GM10248 (cell line): ENCODE measurements at regions of chr3 and their contacts with region 1.

Region 1: DNA sequence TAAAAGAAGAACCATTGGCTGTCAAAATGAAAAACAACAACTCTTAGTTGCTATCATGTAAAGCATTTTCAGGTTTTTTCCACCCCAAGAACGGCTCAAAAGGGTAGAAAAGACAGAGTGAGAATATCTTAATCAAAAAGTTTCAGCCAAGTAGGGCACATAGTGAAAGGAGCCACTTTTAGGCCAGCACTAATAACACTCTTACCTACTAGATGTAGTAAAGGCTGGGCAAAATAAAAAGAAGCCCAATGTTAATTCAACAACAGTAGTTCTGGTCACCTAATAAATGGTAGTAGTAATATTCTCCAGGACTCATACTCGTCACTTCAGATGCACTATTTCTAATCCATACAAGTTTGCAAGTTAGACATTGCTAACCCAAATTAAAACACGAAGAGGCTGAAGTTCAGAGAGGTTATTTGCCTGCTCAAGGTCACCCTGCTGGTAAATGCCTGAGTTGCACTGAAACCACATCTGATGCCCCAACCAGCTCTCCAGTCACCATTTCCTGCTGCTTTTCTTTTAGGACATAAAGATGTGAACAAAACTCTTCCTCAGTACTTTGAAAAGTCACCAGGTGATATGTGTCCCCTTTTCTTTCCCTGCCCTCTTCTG is 7.5 kb downstream of the GOLIM4 start:
- DNase-seq: peak; percentile 16
- CTCF ChIP-seq: peak; percentile 28

Region 2: DNA sequence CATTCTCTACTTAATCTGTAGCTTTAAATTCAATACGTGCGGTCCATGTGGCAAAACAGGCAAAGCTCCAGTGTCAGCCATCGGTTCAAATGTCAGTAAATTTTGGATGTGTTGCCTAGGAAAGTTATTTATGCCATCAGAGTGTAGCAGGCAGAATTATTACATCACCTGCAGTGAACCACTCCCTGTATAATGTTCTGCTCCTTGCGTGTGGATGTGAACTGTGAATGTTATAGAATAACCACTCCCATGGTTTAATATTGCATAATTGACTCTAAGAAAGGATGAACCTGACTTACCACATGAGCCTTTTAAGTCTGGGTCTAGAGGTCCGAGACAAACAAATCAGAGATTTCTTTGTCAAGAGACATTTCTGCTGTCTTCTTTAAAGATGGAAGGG is 138.0 kb before region 1 on chr3:
- CTCF ChIA-PET with region 1: no interaction called
- POLR2A ChIA-PET with region 1: no interaction called
- DNase-seq: no peak
- CTCF ChIP-seq: no peak

Region 3: DNA sequence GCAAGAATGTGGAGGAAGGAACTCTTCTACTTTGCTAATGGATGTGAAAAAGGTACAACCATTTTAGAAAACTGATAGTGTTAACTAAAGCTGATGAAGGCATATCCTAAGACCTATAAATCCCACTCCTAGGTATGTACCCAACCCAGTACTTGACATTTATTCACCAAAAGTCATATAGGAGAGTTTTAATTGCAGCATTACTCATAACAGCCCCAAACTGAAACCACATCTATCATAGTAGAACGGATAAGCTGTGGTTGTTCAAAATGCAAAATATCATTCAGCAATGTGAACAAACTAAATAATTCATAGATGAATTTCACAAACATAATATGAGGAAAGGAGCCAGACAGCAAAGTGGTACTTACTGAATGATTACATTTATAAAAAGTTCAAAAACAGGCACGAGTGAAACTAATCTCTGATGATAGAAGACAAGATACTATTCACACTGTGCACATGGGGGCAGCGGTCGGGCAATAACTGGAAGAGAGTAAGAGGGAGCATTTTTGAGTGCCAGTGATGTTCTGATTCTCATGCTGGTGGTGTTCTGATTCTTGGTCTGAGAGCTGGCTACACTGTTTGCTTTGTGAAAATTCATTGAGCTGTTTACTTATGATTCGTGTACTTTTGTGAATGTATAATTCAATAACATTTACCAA is 26.7 kb before region 1 on chr3:
- CTCF ChIA-PET with region 1: interaction called, 17 read pairs
- POLR2A ChIA-PET with region 1: no interaction called
- DNase-seq: no peak
- CTCF ChIP-seq: no peak

Region 4: DNA sequence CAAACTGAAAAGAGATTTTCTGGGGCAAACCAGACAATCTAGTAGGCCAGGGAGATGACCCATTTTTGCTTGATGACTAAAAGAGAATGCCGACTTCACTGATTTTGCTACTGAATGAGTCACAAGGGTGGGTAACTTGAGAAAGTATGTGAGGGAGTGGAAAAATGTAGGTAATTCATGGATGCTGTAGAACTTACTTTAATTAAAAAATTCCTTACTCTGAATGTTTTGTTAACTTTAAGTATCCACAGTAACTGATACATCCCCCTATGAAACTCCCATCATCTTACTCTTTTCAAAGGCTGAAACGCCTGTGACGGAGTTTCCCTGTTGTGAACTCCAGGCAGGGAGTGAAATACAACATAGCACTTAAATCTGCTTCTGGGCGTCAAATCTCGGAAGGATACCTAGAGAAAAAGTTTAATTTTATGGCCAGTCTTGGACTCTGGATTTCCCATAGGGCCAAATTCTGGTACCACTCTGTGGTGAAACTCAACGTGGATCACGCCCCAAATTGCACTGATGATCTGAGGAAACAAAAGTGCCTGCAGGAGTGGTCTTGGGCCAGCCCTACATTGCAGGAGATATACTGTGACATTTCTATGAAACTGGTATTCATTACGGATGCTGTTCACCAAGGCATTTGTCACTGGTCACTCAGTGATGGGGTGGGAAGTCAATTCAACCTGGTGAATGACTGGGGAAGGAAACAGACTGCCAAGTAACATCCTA is 16.5 kb before region 1 on chr3:
- CTCF ChIA-PET with region 1: interaction called, 15 read pairs
- POLR2A ChIA-PET with region 1: no interaction called
- DNase-seq: no peak
- CTCF ChIP-seq: no peak

Region 5: DNA sequence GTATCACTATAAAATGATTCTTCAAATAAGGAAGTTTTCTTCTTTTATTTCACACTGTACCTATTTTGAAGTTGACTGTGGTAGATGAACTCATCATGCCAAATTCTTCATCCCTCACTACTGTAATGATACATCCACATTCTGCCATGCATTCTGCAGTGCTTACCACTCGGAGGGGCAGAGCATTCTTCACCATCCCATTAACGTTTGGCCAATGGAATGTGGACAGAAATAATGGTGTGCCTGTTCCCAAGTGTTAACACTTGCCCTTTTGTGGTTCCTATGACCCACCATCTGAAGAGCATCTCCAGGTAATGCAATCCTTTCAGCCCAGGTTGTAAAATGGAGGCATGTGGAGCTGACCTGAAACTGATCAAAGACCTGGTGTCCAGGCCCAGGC is 11.1 kb before region 1 on chr3:
- CTCF ChIA-PET with region 1: interaction called, 15 read pairs
- POLR2A ChIA-PET with region 1: no interaction called
- DNase-seq: no peak
- CTCF ChIP-seq: no peak

Region 6: DNA sequence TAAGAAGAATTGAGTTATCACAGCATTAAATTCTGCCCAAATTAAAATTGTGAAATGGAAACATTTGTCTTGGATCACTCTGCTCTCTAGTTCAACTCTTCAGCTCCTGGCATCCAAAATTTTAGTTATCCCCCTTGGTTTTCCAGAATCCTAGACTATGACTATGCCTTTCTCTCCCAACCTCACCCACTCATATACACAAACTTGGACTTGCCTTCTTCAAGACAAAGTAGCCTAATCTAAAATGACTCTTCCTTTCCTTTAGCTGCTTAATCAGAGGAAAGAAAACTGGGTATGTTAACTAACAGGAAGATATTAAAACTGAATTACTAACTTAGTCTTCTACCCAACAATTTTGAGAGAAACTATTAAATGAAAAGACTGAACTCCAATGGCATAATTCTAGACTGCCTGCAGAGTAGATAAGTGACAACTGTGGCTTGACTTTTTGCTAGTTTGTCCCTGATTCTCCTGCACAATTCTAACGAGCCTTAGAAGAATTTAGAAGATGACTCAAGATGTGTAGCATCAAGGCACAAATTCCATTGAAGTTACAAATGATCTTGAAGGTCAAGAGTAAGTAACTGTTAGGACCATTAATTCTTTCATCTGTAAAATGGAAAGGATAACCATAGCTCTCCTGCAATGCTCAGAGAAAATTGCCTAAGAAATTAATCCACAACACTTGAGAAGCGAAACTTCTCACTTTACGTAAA is 12.7 kb after region 1 on chr3:
- CTCF ChIA-PET with region 1: interaction called, 14 read pairs
- POLR2A ChIA-PET with region 1: no interaction called
- DNase-seq: no peak
- CTCF ChIP-seq: no peak